ENCODE measurements at regions of chr20 and their contacts with region 1.

Region 1: DNA sequence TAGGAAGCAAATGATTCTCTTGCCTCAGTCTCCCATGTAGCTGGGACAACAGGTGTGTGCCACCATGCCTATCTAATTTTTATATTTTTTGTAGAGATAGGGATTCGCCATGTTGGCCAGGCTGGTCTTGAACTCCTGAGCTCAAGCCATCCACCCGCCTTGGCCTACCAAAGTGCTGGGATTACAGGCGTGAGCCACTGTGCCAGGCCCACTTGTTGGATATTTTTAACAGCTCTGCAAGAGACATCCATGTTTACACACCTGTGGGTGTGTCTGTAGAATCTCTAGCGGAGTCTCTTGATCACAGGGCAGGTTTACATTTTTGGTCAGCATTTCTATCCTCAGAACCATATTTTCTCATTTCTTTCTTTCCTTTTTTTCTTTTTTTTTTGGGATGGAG is 53.1 kb upstream of the ZFP64 start:
- DNase-seq: no peak
- H3K4me3 ChIP-seq: no peak overlapping the region
- H3K4me3 Mint-ChIP-seq: no peak overlapping the region
- H3K27ac ChIP-seq: no peak overlapping the region
- H3K27ac Mint-ChIP-seq: no peak overlapping the region
- H3K4me1 ChIP-seq: no peaks in the 10 kb centered on the region
- H3K4me1 Mint-ChIP-seq: peaks cover 3% of the 10 kb centered on the region
- H3K27me3 ChIP-seq: no peaks in the 10 kb centered on the region
- H3K27me3 Mint-ChIP-seq: peaks cover 2 to 6% (median 4%) of the 10 kb centered on the region in 3 donors
- CTCF ChIP-seq: no peak

Region 2: GRCh38 chr20:53210931-53211330 is 966.2 kb after region 1 on chr20:
- intact Hi-C with region 1: loop called (anchors 5 kb)
- DNase-seq: no peak
- H3K4me3 ChIP-seq: no peak overlapping the region
- H3K4me3 Mint-ChIP-seq: no peak overlapping the region
- H3K27ac ChIP-seq: no peak overlapping the region
- H3K27ac Mint-ChIP-seq: no peak overlapping the region
- H3K4me1 ChIP-seq: no peaks in the 10 kb centered on the region
- H3K4me1 Mint-ChIP-seq: no peaks in the 10 kb centered on the region
- H3K27me3 ChIP-seq: no peaks in the 10 kb centered on the region
- H3K27me3 Mint-ChIP-seq: peaks cover 2 to 6% (median 3%) of the 10 kb centered on the region in 3 donors
- CTCF ChIP-seq: no peak

Region 3: DNA sequence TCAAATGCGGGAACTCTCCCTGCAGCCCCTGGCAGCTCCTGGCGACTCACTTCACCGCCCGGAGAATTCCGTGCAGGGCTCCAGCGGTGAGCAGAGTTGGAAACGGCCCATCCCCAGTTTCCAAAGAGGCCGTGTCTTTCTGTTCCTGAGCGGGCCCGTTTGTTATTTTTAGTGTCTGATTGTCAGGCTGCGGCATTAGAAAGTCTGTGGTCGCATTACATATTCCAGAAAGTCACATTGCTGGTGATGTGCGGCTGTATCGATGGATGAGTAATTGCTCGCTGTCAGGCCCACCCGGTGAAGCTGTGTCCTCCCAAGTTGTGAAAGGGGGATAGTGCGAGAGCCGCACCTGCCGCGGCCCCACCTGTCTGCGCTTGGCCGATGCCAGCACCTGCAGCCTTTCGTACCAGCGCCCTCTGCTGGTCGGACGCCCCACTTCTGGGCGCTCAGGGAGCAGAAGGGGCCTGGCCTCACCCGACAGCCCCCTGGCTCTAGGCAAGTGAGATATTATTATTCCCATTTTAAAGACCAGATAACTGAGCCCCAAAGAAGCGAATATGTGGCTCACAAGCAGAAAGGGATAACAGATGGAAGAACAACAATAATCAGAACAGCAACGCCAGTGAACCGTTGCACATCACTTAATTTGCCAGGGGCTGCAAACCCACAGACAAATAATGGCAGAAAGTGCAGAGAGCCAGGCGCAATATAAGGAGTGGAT is 972.3 kb after region 1 on chr20:
- intact Hi-C with region 1: loop called (anchors 5 kb)
- DNase-seq: peak; percentile 6 to 33 (median 26)
- H3K4me3 ChIP-seq: no peak overlapping the region
- H3K4me3 Mint-ChIP-seq: peak overlapping the region in 1 of 2 donors; percentile 33
- H3K27ac ChIP-seq: no peak overlapping the region
- H3K27ac Mint-ChIP-seq: peak overlapping the region in 1 of 7 donors; percentile 62
- H3K4me1 ChIP-seq: no peaks in the 10 kb centered on the region
- H3K4me1 Mint-ChIP-seq: no peaks in the 10 kb centered on the region
- H3K27me3 ChIP-seq: peaks cover 2 to 5% of the 10 kb centered on the region in 2 donors
- H3K27me3 Mint-ChIP-seq: peaks cover 6 to 8% (median 8%) of the 10 kb centered on the region in 3 donors
- CTCF ChIP-seq: peak; percentile 92

Measured in CD14-positive monocyte (primary cell).